Esophagus muscularis mucosa (tissue), 4 donors: ENCODE measurements at regions of chr3 and their contacts with region 1.

Region 1: DNA sequence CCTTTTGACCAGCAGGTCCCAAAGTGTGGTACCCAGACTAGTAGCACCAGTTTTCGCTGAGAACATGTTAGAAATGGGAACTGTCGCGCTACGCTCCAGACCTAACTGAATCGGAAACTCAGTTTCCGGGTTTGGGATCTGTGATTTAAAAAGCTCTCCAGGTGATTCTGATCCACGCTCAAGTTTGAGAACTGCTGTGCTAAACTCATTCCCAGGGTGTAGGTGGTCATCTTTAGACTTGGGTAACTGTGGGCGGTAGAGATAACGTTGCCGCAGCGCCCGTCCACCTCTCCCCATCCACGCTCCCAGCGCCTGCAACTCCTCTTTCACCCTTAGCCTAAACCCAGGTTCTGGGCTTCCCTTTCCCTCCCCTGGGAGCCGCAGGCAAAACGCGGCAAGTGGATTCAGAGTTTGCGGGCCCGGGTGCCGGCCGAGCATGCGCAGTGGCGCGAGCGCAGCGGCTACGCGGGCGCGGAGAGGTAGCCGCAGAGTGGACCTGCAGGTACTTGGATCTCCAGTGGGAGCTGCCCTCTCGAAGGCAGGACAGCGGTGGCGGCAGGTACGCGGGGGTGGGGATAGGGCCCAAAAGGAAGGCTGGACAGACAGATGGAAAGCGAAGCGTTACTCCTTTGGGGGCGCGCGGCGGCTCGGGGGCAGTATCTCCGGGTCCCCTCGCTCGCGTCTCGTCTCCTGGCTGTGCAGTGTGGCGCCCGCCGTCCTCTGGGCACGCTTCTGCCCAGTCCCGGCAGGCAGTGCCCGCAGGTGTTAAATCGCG is at the start of gene PLS1:
- DNase-seq: peak; percentile 95
- H3K4me3 ChIP-seq: peak within 1 kb of the TSS; percentile 56 to 85 (median 78)
- H3K27ac ChIP-seq: peak within 1 kb of the TSS; percentile 61 to 68 (median 68)
- H3K4me1 ChIP-seq: peaks cover 11 to 15% (median 14%) of the 10 kb centered on the region in 4 donors
- H3K27me3 ChIP-seq: no peaks in the 10 kb centered on the region
- CTCF ChIP-seq: peak in 1 of 3 experiments; percentile 29
- EP300 ChIP-seq: no peak
- POLR2A ChIP-seq: no peak
- total RNA-seq, gene PLS1: 1.2 to 2.0 (median 1.5) TPM

Region 2: GRCh38 chr3:142578327-142579223 is 17.6 kb before region 1 on chr3 and contains the start of gene ATR:
- intact Hi-C with region 1: loop called (anchors 2 kb)
- DNase-seq: peak; percentile 99
- H3K4me3 ChIP-seq: peak within 1 kb of the TSS; percentile 77 to 92 (median 80)
- H3K27ac ChIP-seq: peak within 1 kb of the TSS; percentile 84 to 96 (median 88)
- H3K4me1 ChIP-seq: peaks cover 17 to 30% (median 22%) of the 10 kb centered on the region in 4 donors
- H3K27me3 ChIP-seq: no peaks in the 10 kb centered on the region
- CTCF ChIP-seq: no peak
- EP300 ChIP-seq: no peak
- POLR2A ChIP-seq: peak; percentile 13
- total RNA-seq, gene ATR: 9.5 to 16.6 (median 13.3) TPM

Region 3: DNA sequence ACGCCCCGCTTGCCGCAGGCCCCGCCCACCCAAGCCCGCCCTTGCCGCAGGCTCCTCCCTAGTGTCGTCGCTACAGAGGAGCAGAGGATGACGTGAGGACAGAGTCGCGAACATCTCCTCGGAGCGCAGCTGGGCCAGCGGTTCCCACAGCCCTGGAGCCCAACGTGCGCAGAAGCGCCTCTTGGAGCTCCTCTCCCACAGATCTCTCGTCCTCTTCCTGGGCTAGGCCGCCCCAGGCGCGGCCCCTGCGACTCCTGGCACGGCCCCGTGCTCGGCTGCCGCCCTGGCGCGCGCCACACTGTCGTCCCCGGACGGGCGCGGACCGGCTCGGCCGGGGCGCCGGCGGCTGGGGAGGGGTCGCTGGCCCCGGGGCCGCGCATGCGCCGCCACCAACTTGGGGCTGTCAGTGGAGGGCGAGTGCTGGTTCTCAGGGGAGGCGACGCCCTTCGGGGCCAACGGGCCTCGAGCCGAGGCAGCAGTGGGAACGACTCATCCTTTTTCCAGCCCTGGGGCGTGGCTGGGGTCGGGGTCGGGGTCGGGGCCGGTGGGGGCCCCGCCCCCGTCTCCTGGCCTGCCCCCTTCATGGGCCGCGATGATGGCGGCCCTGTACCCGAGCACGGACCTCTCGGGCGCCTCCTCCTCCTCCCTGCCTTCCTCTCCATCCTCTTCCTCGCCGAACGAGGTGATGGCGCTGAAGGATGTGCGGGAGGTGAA is 128.0 kb after region 1 on chr3 and contains the start of gene TRPC1:
- intact Hi-C with region 1: loop called (anchors 5 kb)
- DNase-seq: peak; percentile 95
- H3K4me3 ChIP-seq: peak within 1 kb of the TSS; percentile 76 to 95 (median 90)
- H3K27ac ChIP-seq: peak within 1 kb of the TSS; percentile 91 to 96 (median 93)
- H3K4me1 ChIP-seq: peaks cover 0 to 24% (median 22%) of the 10 kb centered on the region in 4 donors
- H3K27me3 ChIP-seq: no peaks in the 10 kb centered on the region
- CTCF ChIP-seq: no peak
- EP300 ChIP-seq: no peak
- POLR2A ChIP-seq: peak; percentile 55
- total RNA-seq, gene TRPC1: 19.5 to 31.1 (median 23.2) TPM

Region 4: DNA sequence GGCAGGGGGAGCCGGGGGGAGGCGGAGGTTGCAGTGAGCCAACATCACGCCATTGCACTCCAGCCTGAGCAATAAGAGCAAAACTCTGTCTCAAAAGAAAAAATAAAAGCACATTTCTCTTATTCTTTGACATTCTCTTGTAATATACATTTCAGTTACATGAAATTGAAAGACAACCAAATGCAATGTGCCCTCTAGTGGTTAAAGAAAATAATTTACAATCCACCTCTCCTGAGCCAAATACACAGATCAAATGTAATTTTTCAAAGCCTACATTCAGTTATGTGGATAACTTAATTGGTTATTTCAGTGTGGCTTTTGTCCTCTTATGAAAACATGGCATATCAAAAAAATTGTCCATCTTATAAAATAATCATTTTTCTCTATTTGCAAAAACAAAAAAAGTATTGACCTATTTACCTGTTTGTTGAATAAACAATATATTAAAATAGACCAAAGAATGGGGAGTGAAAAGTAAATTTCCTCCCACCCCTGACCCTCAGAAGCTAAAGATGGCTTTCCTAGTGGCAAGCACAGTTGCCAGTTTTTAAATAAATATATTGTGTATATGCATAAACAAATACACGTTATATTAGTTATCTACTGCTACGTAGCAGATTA is 391.1 kb after region 1 on chr3:
- intact Hi-C with region 1: loop called (anchors 5 kb)
- DNase-seq: no peak
- H3K4me3 ChIP-seq: no peak overlapping the region
- H3K27ac ChIP-seq: peak overlapping the region in 3 of 4 donors; percentile 8 to 14 (median 9)
- H3K4me1 ChIP-seq: peaks cover 0 to 13% (median 8%) of the 10 kb centered on the region in 4 donors
- H3K27me3 ChIP-seq: no peaks in the 10 kb centered on the region
- CTCF ChIP-seq: peak; percentile 57 to 71 (median 65)
- EP300 ChIP-seq: no peak
- POLR2A ChIP-seq: no peak